ENCODE measurements at regions of chr6 and their contacts with region 1.

Region 1: GRCh38 chr6:16183187-16183664 is 54.3 kb downstream of the MYLIP start:
- DNase-seq: no peak
- H3K4me3 Mint-ChIP-seq: no peak overlapping the region
- H3K27ac Mint-ChIP-seq: no peak overlapping the region
- H3K4me1 Mint-ChIP-seq: peaks cover 7% of the 10 kb centered on the region
- H3K27me3 Mint-ChIP-seq: no peaks in the 10 kb centered on the region
- CTCF ChIP-seq: no peak

Region 2: GRCh38 chr6:15905488-15906440 is 277.5 kb before region 1 on chr6:
- CTCF ChIA-PET with region 1: no interaction called
- intact Hi-C with region 1: loop called (anchors 5 kb)
- DNase-seq: no peak
- H3K4me3 Mint-ChIP-seq: no peak overlapping the region
- H3K27ac Mint-ChIP-seq: no peak overlapping the region
- H3K4me1 Mint-ChIP-seq: peaks cover 45% of the 10 kb centered on the region
- H3K27me3 Mint-ChIP-seq: no peaks in the 10 kb centered on the region
- CTCF ChIP-seq: no peak

Region 3: GRCh38 chr6:16216501-16217155 is 33.4 kb after region 1 on chr6:
- CTCF ChIA-PET with region 1: no interaction called
- intact Hi-C with region 1: no loop called
- DNase-seq: no peak
- H3K4me3 Mint-ChIP-seq: no peak overlapping the region
- H3K27ac Mint-ChIP-seq: no peak overlapping the region
- H3K4me1 Mint-ChIP-seq: no peaks in the 10 kb centered on the region
- H3K27me3 Mint-ChIP-seq: no peaks in the 10 kb centered on the region
- CTCF ChIP-seq: no peak

Region 4: GRCh38 chr6:16973545-16974386 is 790.5 kb after region 1 on chr6:
- CTCF ChIA-PET with region 1: no interaction called
- intact Hi-C with region 1: no loop called
- DNase-seq: no peak
- H3K4me3 Mint-ChIP-seq: no peak overlapping the region
- H3K27ac Mint-ChIP-seq: no peak overlapping the region
- H3K4me1 Mint-ChIP-seq: no peaks in the 10 kb centered on the region
- H3K27me3 Mint-ChIP-seq: peaks cover 87% of the 10 kb centered on the region
- CTCF ChIP-seq: no peak